Activated T-helper 1 cell treated with anti-CD3 and anti-CD28 coated beads, Interleukin-12 subunit alpha, Interleukin-12 subunit beta, Interleukin-2, Interleukin-4 antibody, amounts not matched to agents 30 ng/mL and 10 ng/mL and 1 ng/mL, durations not matched to agents 14 hours and 24 hours and 36 hours (primary cell): ENCODE measurements at regions of chr3 and their contacts with region 1.

Region 1: DNA sequence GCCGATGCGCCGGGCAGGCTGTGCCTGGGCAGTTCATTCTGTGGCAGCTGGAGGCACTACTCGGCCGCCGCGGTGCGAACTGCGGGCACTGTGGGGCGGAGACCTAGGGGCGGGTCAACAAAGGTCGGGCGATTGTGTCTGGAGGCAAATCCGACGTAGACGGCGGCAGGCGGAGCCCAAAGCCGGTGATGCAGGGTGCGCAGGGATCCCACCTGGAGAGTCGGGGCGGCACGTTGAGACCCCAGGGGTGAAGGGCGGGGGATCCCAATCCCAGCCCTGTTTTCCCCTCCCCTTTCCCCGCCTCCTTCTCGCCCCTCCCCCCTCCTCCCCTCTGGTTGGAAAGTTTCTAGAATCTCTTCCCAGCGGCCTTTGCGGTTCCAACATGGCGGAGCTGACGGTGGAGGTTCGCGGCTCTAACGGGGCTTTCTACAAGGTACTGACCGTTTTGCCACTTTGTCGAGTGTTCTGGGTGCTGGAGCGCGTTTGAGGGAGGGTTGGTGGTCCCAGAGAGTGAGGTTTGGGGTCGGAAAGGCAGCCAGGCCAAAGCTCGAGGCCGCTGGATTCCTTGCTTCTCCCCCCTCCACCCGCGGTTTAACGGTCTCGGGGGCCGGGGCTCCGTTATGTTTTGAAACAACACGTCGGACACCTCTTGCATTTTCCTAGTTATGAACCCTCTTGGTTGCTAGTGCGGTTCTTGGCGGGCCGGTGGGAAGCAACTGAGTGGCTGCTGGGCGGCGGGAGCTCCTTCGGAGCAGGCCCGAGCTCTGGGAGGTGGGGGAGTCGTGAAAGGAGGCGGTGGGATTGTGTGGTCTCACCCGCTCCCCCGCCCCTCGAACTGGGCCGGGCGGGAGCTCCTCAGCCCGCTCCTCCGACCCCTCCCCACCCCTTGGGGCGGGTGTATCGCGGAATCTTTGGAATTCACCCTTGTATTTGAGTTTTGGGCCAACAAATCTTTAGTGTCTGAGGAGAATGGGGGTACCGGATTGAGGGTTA is at the start of gene FXR1:
- DNase-seq: peak; percentile 76
- H3K4me3 Mint-ChIP-seq: peak within 1 kb of the TSS; percentile 91
- H3K27ac Mint-ChIP-seq: peak within 1 kb of the TSS; percentile 96
- H3K4me1 Mint-ChIP-seq: peaks cover 35% of the 10 kb centered on the region
- H3K27me3 Mint-ChIP-seq: no peaks in the 10 kb centered on the region
- total RNA-seq, gene FXR1: 140 and 141 TPM in 2 replicates

Region 2: DNA sequence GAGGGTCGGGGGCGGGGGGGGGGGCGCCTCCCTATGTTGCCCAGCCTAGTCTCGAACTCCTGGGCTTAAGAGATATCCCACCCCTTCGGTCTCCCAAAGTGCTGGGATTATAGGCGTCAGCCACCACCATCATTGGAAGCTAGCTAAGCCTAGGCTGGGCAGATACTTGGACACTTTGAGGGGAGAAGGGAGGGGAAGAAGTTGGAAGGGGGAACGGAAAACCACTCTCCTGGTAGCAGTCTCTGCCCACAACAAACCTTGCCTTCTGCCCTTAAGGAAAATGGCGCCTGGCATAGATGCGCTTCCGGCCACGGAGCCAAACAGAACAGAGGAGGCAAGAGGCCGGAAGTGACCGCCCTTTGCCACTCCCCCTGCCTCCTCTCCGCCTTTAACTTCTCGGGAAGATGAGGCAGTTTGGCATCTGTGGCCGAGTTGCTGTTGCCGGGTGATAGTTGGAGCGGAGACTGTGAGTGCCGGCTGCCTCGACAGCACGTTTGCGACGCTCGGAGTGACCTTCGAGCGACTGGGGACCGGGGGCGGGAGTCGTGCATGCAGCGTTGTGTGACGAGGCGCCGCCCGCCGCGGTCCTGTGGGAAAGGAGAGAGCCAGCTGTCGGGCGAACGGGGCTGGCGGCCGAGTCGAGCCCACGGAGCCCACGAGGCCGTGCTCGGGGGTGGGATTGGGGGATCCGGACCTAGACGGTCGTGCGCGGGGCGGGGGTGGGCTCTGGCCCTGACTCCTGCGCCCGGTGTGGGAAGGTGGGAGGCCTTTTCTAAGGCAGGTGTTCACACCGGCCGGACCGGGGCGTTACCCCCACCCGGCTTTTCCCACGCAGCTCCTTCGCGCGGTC is 1565.0 kb before region 1 on chr3 and contains the start of gene MFN1:
- intact Hi-C with region 1: loop called (anchors 2 kb)
- DNase-seq: peak; percentile 87
- H3K4me3 Mint-ChIP-seq: peak within 1 kb of the TSS; percentile 98
- H3K27ac Mint-ChIP-seq: peak within 1 kb of the TSS; percentile 96
- H3K4me1 Mint-ChIP-seq: peaks cover 25% of the 10 kb centered on the region
- H3K27me3 Mint-ChIP-seq: no peaks in the 10 kb centered on the region
- total RNA-seq, gene MFN1: 29.5 and 37.7 TPM in 2 replicates

Region 3: GRCh38 chr3:179653096-179653797 is 1259.4 kb before region 1 on chr3:
- intact Hi-C with region 1: loop called (anchors 2 kb)
- DNase-seq: peak; percentile 57
- H3K4me3 Mint-ChIP-seq: peak overlapping the region; percentile 93
- H3K27ac Mint-ChIP-seq: peak overlapping the region; percentile 87
- H3K4me1 Mint-ChIP-seq: peaks cover 27% of the 10 kb centered on the region
- H3K27me3 Mint-ChIP-seq: peaks cover 9% of the 10 kb centered on the region

Region 4: GRCh38 chr3:180624714-180625113 is 287.9 kb before region 1 on chr3:
- intact Hi-C with region 1: loop called (anchors 1 kb)
- DNase-seq: no peak
- H3K4me3 Mint-ChIP-seq: peak overlapping the region; percentile 36
- H3K27ac Mint-ChIP-seq: peak overlapping the region; percentile 86
- H3K4me1 Mint-ChIP-seq: peaks cover 36% of the 10 kb centered on the region
- H3K27me3 Mint-ChIP-seq: no peaks in the 10 kb centered on the region

Region 5: GRCh38 chr3:180947761-180948633 is 35.4 kb after region 1 on chr3:
- intact Hi-C with region 1: loop called (anchors 5 kb)
- DNase-seq: no peak
- H3K4me3 Mint-ChIP-seq: no peak overlapping the region
- H3K27ac Mint-ChIP-seq: no peak overlapping the region
- H3K4me1 Mint-ChIP-seq: peaks cover 25% of the 10 kb centered on the region
- H3K27me3 Mint-ChIP-seq: no peaks in the 10 kb centered on the region

Region 6: GRCh38 chr3:182792901-182793662 is 1880.5 kb after region 1 on chr3 and contains the start of gene ATP11B:
- intact Hi-C with region 1: loop called (anchors 2 kb)
- DNase-seq: peak; percentile 75
- H3K4me3 Mint-ChIP-seq: peak within 1 kb of the TSS; percentile 94
- H3K27ac Mint-ChIP-seq: peak within 1 kb of the TSS; percentile 98
- H3K4me1 Mint-ChIP-seq: peaks cover 34% of the 10 kb centered on the region
- H3K27me3 Mint-ChIP-seq: no peaks in the 10 kb centered on the region
- total RNA-seq, gene ATP11B: 92.3 and 95.1 TPM in 2 replicates